ENCODE measurements at regions of chrX and their contacts with region 1.

Region 1: GRCh38 chrX:110167952-110168451 is 149.9 kb downstream of the AMMECR1 start:
- DNase-seq: no peak
- ATAC-seq: peak; percentile 73
- H3K4me3 ChIP-seq: no peak overlapping the region
- H3K27ac ChIP-seq: no peak overlapping the region
- H3K4me1 ChIP-seq: peaks cover 10% of the 10 kb centered on the region
- H3K27me3 ChIP-seq: no peaks in the 10 kb centered on the region
- CTCF ChIP-seq: peak; percentile 52 to 75 (median 67)
- EP300 ChIP-seq: no peak
- POLR2A ChIP-seq: no peak
- RAD21 ChIP-seq: peak; percentile 52

Region 2: GRCh38 chrX:110258552-110258951 is 90.5 kb after region 1 on chrX:
- CTCF ChIA-PET with region 1: no interaction called
- POLR2A ChIA-PET with region 1: no interaction called
- RAD21 ChIA-PET with region 1: no interaction called
- SMC1A ChIA-PET with region 1: no interaction called
- in situ Hi-C with region 1: no loop called
- intact Hi-C with region 1: no loop called
- DNase-seq: no peak
- ATAC-seq: no peak
- H3K4me3 ChIP-seq: no peak overlapping the region
- H3K27ac ChIP-seq: no peak overlapping the region
- H3K4me1 ChIP-seq: no peaks in the 10 kb centered on the region
- H3K27me3 ChIP-seq: no peaks in the 10 kb centered on the region
- CTCF ChIP-seq: no peak
- EP300 ChIP-seq: no peak
- POLR2A ChIP-seq: no peak
- RAD21 ChIP-seq: no peak

Region 3: DNA sequence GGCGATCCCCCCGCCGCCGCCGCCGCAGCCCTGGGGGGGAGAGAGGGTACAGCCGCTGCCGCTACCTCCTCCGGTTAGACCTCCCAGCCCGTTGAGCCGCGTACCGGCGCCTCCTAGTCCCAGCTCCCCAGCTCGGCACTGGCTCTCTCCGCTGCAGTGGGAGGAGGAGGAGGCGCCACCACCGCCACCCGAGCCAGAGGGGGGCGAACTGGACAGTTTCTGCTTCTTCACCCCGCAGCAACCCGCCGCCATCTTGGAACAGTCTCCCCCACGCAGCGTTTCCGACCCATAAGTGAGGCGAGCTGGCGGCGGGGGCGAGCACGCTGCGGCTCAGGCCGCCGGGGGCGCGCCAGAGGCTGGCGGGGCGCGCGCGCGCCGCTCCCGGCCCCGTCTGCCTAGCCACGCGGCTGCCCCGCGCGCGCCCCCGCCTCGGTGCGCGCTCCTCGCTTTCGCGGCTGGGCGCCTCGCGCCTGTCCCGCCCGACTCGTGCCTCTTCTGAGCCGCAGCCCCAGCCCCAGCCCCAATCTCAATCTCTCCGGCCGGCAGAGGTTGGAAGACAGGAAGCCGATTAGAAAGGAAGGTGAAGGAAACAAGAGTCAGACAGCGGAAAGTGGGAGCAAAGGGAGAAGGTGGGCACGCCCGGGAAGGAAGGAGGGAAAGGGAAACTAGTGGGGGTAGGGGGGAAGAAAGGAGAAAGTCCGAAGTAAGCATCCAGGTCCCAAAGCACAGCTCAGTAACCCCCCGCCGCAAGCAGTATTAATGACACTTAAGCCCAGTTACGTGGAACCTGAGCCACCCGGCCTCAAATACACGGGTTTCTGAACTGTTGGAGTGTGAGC is 150.0 kb after region 1 on chrX and contains the start of gene AMMECR1:
- CTCF ChIA-PET with region 1: interaction called, 5 read pairs
- POLR2A ChIA-PET with region 1: interaction called, 6 read pairs
- RAD21 ChIA-PET with region 1: interaction called, 6 read pairs
- SMC1A ChIA-PET with region 1: interaction called, 5 read pairs
- in situ Hi-C with region 1: no loop called
- intact Hi-C with region 1: loop called (anchors 2 kb)
- DNase-seq: no peak
- ATAC-seq: peak; percentile 73
- H3K4me3 ChIP-seq: peak within 1 kb of the TSS; percentile 79
- H3K27ac ChIP-seq: peak within 1 kb of the TSS; percentile 75
- H3K4me1 ChIP-seq: no peaks in the 10 kb centered on the region; the same call in 1 of the 2 replicates
- H3K27me3 ChIP-seq: no peaks in the 10 kb centered on the region
- CTCF ChIP-seq: no peak
- EP300 ChIP-seq: no peak
- POLR2A ChIP-seq: peak; percentile 91
- RAD21 ChIP-seq: no peak
- polyA plus RNA-seq, gene AMMECR1: 4.9 to 6.4 TPM

Region 4: DNA sequence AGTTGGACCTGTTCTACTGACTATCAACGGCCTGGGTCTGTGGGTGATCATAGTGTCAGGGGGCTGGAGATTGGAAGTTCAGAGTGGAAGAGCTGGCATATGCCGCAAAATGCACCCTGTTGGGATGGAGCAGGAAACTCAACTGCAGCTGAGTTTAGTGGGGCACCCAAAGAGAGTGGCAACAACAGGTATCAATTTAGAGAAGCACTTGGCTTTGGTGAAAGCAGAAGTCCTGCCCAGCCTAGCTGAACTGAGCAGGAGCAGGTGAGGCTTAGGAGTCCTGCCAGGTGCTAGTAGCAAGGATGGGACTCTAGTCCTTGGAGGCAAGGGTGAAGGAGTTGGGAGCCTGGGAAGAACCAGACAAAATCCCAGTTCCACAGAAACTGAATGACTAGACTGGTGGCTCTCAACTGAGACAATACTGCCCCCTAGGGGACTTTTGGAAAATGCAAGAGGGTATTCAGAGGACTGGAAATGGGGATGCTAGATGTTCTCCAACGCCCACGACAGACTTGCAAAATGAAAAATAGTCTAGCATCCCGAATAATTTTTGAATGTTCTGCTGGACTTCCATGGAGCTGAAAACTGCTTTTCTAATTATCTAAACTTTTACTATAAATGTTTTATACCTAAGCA is 240.0 kb after region 1 on chrX:
- CTCF ChIA-PET with region 1: interaction called, 792 read pairs
- POLR2A ChIA-PET with region 1: no interaction called
- RAD21 ChIA-PET with region 1: interaction called, 130 read pairs
- SMC1A ChIA-PET with region 1: interaction called, 18 read pairs
- in situ Hi-C with region 1: loop called (anchors 5 kb)
- intact Hi-C with region 1: no loop called
- DNase-seq: no peak
- ATAC-seq: peak; percentile 82
- H3K4me3 ChIP-seq: no peak overlapping the region
- H3K27ac ChIP-seq: no peak overlapping the region
- H3K4me1 ChIP-seq: no peaks in the 10 kb centered on the region
- H3K27me3 ChIP-seq: no peaks in the 10 kb centered on the region
- CTCF ChIP-seq: peak; percentile 60 to 73 (median 68); a peak in 5 of 6 replicates
- EP300 ChIP-seq: no peak
- POLR2A ChIP-seq: no peak
- RAD21 ChIP-seq: peak; percentile 90

Region 5: GRCh38 chrX:110412971-110413721 is 245.1 kb after region 1 on chrX:
- CTCF ChIA-PET with region 1: interaction called, 792 read pairs
- POLR2A ChIA-PET with region 1: no interaction called
- RAD21 ChIA-PET with region 1: interaction called, 130 read pairs
- SMC1A ChIA-PET with region 1: interaction called, 18 read pairs
- in situ Hi-C with region 1: loop called (anchors 5 kb)
- intact Hi-C with region 1: no loop called
- DNase-seq: no peak
- ATAC-seq: peak; percentile 92
- H3K4me3 ChIP-seq: no peak overlapping the region
- H3K27ac ChIP-seq: no peak overlapping the region
- H3K4me1 ChIP-seq: peaks cover 5% of the 10 kb centered on the region
- H3K27me3 ChIP-seq: no peaks in the 10 kb centered on the region
- CTCF ChIP-seq: peak; percentile 85 to 89 (median 88)
- EP300 ChIP-seq: no peak
- POLR2A ChIP-seq: no peak
- RAD21 ChIP-seq: peak; percentile 74

Region 6: DNA sequence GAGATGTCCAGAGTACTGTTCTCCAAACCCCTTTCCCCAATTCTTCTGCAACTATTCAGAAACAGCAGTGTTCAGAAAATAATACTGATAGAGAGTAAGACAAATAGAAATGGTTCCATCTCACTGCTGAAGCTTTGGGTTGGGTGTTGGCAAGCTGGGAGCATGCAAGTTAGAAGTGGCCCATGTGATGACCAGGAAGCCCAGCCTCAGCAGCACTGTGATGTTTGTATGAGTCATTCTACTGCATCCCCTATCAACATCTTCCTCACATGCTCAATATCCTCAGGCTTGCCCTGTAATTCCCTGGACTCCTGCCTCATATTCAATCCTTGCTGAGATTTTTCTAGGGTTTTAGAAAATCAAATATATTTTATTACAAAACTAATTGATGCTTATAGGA is 531.1 kb after region 1 on chrX:
- CTCF ChIA-PET with region 1: no interaction called
- POLR2A ChIA-PET with region 1: no interaction called
- RAD21 ChIA-PET with region 1: no interaction called
- SMC1A ChIA-PET with region 1: interaction called, 3 read pairs
- in situ Hi-C with region 1: loop called (anchors 25 kb)
- intact Hi-C with region 1: no loop called
- DNase-seq: no peak
- ATAC-seq: peak; percentile 61
- H3K4me3 ChIP-seq: no peak overlapping the region
- H3K27ac ChIP-seq: no peak overlapping the region
- H3K4me1 ChIP-seq: no peaks in the 10 kb centered on the region
- H3K27me3 ChIP-seq: no peaks in the 10 kb centered on the region
- CTCF ChIP-seq: no peak
- EP300 ChIP-seq: no peak
- POLR2A ChIP-seq: no peak
- RAD21 ChIP-seq: no peak

Region 7: DNA sequence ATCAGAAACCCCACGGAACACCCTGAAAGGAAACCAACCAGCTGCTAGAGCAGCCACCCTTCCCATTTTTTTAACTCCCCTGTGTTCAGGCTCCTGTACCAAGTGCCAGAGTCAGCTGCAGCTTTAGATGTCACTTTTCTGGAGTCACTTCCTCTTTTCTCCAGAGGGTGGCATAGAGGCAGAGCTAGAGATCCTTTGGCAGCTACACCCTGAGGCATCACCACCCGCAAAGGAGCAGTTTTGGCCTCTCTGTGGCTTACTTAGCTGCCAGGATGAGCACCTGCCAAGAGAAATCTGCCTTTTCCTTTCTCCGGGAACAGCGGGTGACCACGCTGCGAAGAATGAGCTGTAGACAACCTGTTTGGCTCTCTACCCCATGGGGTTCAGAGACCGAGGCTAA is 685.6 kb after region 1 on chrX:
- CTCF ChIA-PET with region 1: no interaction called
- POLR2A ChIA-PET with region 1: no interaction called
- RAD21 ChIA-PET with region 1: no interaction called
- SMC1A ChIA-PET with region 1: no interaction called
- in situ Hi-C with region 1: no loop called
- intact Hi-C with region 1: loop called (anchors 5 kb)
- DNase-seq: no peak
- ATAC-seq: peak; percentile 67
- H3K4me3 ChIP-seq: no peak overlapping the region
- H3K27ac ChIP-seq: no peak overlapping the region
- H3K4me1 ChIP-seq: no peaks in the 10 kb centered on the region; the same call in 1 of the 2 replicates
- H3K27me3 ChIP-seq: no peaks in the 10 kb centered on the region
- CTCF ChIP-seq: 0 out of 6 replicates have a peak, but pooled peaks of 1 of the 3 experiments have one; percentile 8
- EP300 ChIP-seq: no peak
- POLR2A ChIP-seq: no peak
- RAD21 ChIP-seq: no peak